ENCODE measurements at regions of chr11 and their contacts with region 1.

Region 1: DNA sequence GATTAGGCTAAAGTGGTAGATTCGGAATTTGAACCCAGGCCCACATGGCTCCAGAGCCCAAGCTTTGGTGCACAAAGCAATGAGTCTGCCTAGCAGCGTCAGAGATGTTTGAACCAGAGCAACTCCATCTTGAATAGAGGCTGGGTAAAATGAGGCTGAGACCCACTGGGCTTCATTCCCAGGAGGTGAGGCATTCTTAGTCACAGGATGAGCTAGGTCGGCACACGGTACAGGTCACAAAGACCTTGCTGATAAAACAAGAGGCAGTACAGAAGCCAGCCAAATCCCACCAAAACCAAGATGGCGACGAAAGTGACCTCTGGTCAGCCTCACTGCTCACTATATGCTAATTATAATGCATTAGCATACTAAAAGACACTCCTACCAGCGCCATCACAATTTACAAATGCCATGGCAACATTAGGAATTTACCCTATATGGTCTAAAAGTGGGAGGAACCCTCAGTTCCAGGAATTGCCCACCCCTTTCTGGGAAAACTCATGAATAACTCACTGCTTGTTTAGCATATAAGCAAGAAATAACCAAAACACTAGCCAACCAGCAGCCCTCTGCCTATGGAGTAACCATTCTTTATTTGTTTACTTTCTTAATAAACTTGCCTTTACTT is 40.3 kb upstream of the DAGLA start:
- DNase-seq: no peak
- ATAC-seq: no peak
- H3K4me3 Mint-ChIP-seq: no peak overlapping the region
- H3K27ac Mint-ChIP-seq: no peak overlapping the region
- H3K4me1 Mint-ChIP-seq: no peaks in the 10 kb centered on the region
- H3K27me3 Mint-ChIP-seq: peaks cover 2% of the 10 kb centered on the region
- CTCF ChIP-seq: no peak

Region 2: DNA sequence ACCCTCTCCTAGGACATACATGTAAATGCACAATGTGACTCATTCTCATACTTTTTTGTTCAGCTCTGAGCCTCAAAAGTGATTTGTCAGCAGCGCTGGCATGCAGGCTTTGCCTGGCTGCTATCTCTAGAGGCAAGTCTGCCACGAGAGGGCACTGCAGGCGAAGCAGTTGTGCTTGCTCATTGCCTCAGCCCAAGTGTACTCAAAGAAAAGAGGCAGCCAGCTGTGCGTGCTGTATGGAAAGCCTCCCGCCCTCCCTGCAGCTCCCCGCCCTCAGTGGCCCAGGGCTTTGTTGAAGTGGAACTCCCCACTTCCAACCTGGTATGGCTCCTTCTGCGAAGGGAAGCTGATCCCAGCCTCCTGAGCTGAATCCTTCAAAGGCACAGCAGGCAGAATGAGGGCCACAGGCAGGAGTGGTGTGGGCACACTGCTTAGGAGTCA is 193.7 kb before region 1 on chr11:
- CTCF ChIA-PET with region 1: interaction called, 4 read pairs
- POLR2A ChIA-PET with region 1: no interaction called
- intact Hi-C with region 1: loop called (anchors 1 kb)
- DNase-seq: peak; percentile 27
- ATAC-seq: peak; percentile 82
- H3K4me3 Mint-ChIP-seq: no peak overlapping the region
- H3K27ac Mint-ChIP-seq: no peak overlapping the region
- H3K4me1 Mint-ChIP-seq: no peaks in the 10 kb centered on the region
- H3K27me3 Mint-ChIP-seq: no peaks in the 10 kb centered on the region
- CTCF ChIP-seq: no peak

Region 3: DNA sequence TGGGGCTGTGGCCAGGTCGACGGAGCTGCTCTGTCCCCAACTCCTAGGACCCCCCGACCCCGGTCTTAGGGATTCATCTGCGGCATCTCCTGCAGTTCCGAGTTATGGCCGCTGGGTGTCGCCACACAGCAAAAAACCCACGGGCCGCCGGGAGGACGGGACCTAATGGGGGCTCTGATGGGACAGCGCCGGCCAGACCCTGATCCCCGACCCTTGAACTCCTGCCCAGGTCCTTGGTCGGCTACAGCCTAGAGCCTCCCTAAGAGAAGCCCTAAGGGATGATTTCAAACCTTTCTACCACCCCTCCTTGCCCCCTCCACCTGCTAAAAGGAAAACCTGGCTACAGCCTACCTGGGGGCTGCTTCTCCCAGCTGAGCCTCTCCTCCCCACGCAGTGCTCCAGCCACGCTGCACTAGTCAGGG is 162.2 kb before region 1 on chr11:
- CTCF ChIA-PET with region 1: interaction called, 24 read pairs
- POLR2A ChIA-PET with region 1: interaction called, 3 read pairs
- intact Hi-C with region 1: loop called (anchors 1 kb)
- DNase-seq: peak; percentile 61
- ATAC-seq: peak; percentile 56
- H3K4me3 Mint-ChIP-seq: no peak overlapping the region
- H3K27ac Mint-ChIP-seq: no peak overlapping the region
- H3K4me1 Mint-ChIP-seq: no peaks in the 10 kb centered on the region
- H3K27me3 Mint-ChIP-seq: peaks cover 2% of the 10 kb centered on the region
- CTCF ChIP-seq: peak; percentile 50

Region 4: DNA sequence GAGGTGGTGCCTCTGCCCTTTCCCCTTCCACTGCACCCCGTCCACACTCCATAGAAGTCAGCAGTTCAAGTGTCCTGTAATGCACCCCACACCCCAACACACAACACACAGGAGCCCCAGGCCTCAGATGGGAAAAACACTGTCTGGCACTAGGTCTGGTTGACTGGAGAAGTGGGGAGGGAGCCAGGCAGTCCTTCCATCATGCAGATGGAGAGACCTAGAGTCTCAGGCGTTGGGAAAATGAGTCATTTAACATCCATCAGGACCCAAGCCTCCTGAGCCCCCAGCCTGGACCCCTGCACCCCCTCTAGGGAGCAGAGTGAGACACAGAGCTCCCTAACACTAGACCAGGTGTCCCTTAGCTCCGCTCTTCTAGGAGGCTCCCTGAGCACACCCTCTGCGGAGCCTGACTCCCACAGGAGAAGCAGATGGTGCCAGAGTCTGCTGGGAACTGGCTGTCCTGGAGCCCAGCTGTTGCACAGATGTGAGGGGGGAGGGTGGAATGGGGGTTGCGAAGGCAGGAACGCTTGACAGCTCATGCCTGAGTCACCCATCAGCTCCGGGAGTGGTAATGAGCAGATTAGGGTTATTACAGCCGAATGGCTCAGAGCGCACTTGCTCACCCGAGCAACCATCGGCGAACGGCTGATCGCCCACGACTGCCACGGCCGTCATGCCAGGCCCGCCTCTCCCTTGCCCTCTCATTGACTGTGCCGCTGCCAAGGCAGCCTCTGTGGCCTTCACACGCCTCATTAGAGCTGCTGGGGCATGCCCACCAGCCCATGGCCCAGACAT is 37.0 kb before region 1 on chr11:
- CTCF ChIA-PET with region 1: no interaction called
- POLR2A ChIA-PET with region 1: no interaction called
- intact Hi-C with region 1: no loop called
- DNase-seq: no peak
- ATAC-seq: no peak
- H3K4me3 Mint-ChIP-seq: no peak overlapping the region
- H3K27ac Mint-ChIP-seq: no peak overlapping the region
- H3K4me1 Mint-ChIP-seq: no peaks in the 10 kb centered on the region
- H3K27me3 Mint-ChIP-seq: peaks cover 7% of the 10 kb centered on the region
- CTCF ChIP-seq: no peak